Colonic mucosa (tissue), 4 donors: ENCODE measurements at regions of chr5 and their contacts with region 1.

Region 1: DNA sequence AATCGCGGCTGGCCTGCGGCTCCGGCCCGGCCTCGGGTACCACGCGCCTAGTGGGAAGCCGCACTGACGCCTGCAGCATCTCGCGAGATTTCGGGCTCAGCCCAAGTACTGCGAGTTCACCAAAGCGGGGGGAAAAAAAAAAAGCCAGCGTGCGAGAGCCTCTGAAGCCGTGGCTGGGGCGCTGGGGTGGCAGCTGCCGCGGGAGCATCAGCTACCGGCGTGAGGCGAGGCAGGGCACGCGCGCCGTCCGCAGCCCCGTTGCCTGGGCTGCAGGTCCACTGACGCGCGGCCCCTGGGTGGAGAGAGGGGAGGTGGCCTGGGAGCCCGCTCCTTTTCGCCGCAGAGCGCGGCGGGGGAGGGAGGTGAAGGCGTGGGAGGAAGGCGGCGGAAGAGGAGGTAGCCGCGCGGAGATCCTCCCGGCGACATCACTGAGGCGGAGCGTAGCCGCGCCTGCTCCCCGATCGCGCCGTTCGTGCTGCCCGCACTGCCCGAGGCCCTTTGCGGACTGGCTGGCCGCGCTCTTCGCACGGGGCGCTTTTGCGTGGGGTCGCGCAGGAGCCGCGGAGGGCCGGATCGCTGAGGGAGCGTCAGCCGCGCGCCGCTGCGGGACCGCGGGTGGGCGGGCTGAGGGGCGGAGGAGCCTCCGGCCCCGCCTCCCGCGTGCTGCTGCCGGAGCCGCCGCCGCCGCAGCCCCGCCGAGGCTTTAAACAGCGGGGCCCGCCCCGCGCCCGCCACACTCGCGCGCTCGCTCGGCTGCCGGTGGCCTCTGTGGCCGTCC is at the start of gene SLC12A2:
- DNase-seq: peak; percentile 92
- H3K4me3 ChIP-seq: peak within 1 kb of the TSS; percentile 81
- H3K27ac ChIP-seq: peak within 1 kb of the TSS; percentile 98
- H3K4me1 ChIP-seq: peaks cover 3% of the 10 kb centered on the region
- H3K27me3 ChIP-seq: no peaks in the 10 kb centered on the region
- CTCF ChIP-seq: no peak
- total RNA-seq, gene SLC12A2: 159 to 189 TPM

Region 2: DNA sequence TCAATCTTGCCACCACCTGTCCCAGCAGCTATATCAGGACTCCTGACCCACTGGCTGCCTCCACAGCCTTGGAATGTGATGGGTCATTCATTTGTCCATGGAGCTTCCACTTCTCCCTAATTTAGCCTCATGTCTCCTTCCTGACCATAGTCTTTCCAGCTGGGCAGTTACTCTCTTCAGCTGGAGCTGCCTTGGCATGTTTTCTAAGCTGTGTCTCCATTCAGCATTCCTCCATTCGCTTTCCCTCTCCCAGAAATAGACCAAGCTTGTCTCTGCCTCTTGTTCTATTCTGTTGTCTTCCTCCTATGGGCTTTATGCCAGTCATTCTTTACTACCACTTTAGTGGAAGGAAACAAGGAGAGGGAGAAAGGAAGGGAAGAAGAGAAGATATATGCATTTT is 439.6 kb before region 1 on chr5:
- intact Hi-C with region 1: no loop called
- DNase-seq: no peak
- H3K4me3 ChIP-seq: no peak overlapping the region
- H3K27ac ChIP-seq: no peak overlapping the region
- H3K4me1 ChIP-seq: peaks cover 3% of the 10 kb centered on the region
- H3K27me3 ChIP-seq: no peaks in the 10 kb centered on the region
- CTCF ChIP-seq: no peak

Region 3: DNA sequence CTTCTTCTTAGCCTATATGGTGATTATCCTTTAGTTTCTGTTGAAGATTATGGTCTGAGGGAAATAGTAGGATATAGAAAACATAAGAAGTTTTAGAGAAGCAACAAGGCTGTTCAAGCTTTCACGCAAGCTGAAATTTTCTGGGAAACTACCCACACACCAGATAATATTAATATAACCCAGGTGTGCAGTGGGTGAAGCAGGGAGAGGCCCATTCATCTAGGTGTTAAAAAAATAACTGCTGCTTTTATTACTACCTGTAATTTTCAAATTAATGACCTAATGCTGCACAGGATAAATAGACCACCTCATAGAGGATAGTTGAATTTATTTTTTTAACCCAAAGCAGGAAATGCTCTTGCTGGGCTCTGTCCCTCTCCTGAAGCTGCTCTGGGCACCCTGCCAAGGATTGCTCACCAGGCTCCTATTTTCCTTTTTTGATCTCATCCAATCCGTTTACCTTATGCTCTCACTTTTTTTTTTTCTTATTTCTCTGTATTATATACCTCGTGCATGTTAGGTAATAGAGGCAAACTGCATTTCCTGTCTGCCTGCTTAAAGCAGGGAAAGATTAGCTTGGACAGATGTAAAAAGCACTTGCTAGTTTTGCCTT is 124.0 kb before region 1 on chr5:
- intact Hi-C with region 1: loop called (anchors 10 kb)
- DNase-seq: peak; percentile 88
- H3K4me3 ChIP-seq: no peak overlapping the region
- H3K27ac ChIP-seq: peak overlapping the region; percentile 61
- H3K4me1 ChIP-seq: peaks cover 12% of the 10 kb centered on the region
- H3K27me3 ChIP-seq: no peaks in the 10 kb centered on the region
- CTCF ChIP-seq: no peak

Region 4: GRCh38 chr5:128992331-128992730 is 909.1 kb after region 1 on chr5:
- intact Hi-C with region 1: no loop called
- DNase-seq: no peak
- H3K4me3 ChIP-seq: no peak overlapping the region
- H3K27ac ChIP-seq: no peak overlapping the region
- H3K4me1 ChIP-seq: no peaks in the 10 kb centered on the region
- H3K27me3 ChIP-seq: no peaks in the 10 kb centered on the region
- CTCF ChIP-seq: no peak